ENCODE measurements at regions of chr1 and their contacts with region 1.

Region 1: GRCh38 chr1:45303582-45304310 is 22.9 kb upstream of the HPDL start:
- DNase-seq: peak; percentile 99
- ATAC-seq: peak; percentile 93
- H3K4me3 ChIP-seq: peak overlapping the region; percentile 52
- H3K27ac ChIP-seq: peak overlapping the region; percentile 88
- H3K4me1 ChIP-seq: peaks cover 24% of the 10 kb centered on the region in 2 experiments
- H3K27me3 ChIP-seq: no peaks in the 10 kb centered on the region
- CTCF ChIP-seq: peak; percentile 95 to 99 (median 95)
- EP300 ChIP-seq: peak; percentile 31; the same call in 1 of the 2 replicates
- POLR2A ChIP-seq: peak; percentile 97
- RAD21 ChIP-seq: peak; percentile 93 to 94

Region 2: GRCh38 chr1:44730741-44731512 is 572.8 kb before region 1 on chr1 and contains the start of gene RNU5D-1:
- CTCF ChIA-PET with region 1: interaction called, 5 read pairs
- POLR2A ChIA-PET with region 1: interaction called, 3 read pairs
- in situ Hi-C with region 1: loop called (anchors 10 kb)
- intact Hi-C with region 1: loop called (anchors 5 kb)
- DNase-seq: peak; percentile 87 to 99 (median 90)
- ATAC-seq: peak; percentile 87
- H3K4me3 ChIP-seq: 0 out of 2 replicates have a peak within 1 kb of the TSS, but pooled peaks have one; percentile 3
- H3K27ac ChIP-seq: peak within 1 kb of the TSS; percentile 100
- H3K4me1 ChIP-seq: peaks cover 11 to 16% of the 10 kb centered on the region in 2 experiments
- H3K27me3 ChIP-seq: no peaks in the 10 kb centered on the region
- CTCF ChIP-seq: peak; percentile 79 to 97 (median 93)
- EP300 ChIP-seq: peak; percentile 80
- POLR2A ChIP-seq: peak; percentile 100
- RAD21 ChIP-seq: peak; percentile 4 to 54
- polyA plus RNA-seq, gene RNU5D-1: not detected

Region 3: GRCh38 chr1:44799770-44800584 is 503.8 kb before region 1 on chr1 and contains the start of gene PLK3:
- CTCF ChIA-PET with region 1: no interaction called
- POLR2A ChIA-PET with region 1: interaction called, 7 read pairs
- in situ Hi-C with region 1: loop called (anchors 10 kb)
- intact Hi-C with region 1: no loop called
- DNase-seq: peak; percentile 92 to 99 (median 96)
- ATAC-seq: peak; percentile 93
- H3K4me3 ChIP-seq: peak within 1 kb of the TSS; percentile 77
- H3K27ac ChIP-seq: peak within 1 kb of the TSS; percentile 69
- H3K4me1 ChIP-seq: peaks cover 23 to 53% of the 10 kb centered on the region in 2 experiments
- H3K27me3 ChIP-seq: no peaks in the 10 kb centered on the region; a peak in 1 of 5 replicates
- CTCF ChIP-seq: peak; percentile 94 to 96 (median 95)
- EP300 ChIP-seq: no peak; the same call in 1 of the 2 replicates
- POLR2A ChIP-seq: peak; percentile 91
- RAD21 ChIP-seq: peak; percentile 91 to 96
- polyA plus RNA-seq, gene PLK3: 0.52 to 1.9 TPM

Region 4: GRCh38 chr1:44842862-44843655 is 460.7 kb before region 1 on chr1 and contains the start of gene PTCH2:
- CTCF ChIA-PET with region 1: interaction called, 4 read pairs
- POLR2A ChIA-PET with region 1: interaction called, 4 read pairs
- in situ Hi-C with region 1: loop called (anchors 5 kb)
- intact Hi-C with region 1: no loop called
- DNase-seq: peak; percentile 83 to 95 (median 92)
- ATAC-seq: peak; percentile 93
- H3K4me3 ChIP-seq: peak within 1 kb of the TSS; percentile 56
- H3K27ac ChIP-seq: peak within 1 kb of the TSS; percentile 23; the same call in 1 of the 3 replicates
- H3K4me1 ChIP-seq: peaks cover 5 to 17% of the 10 kb centered on the region in 2 experiments; a peak in 3 of 5 replicates
- H3K27me3 ChIP-seq: no peaks in the 10 kb centered on the region
- CTCF ChIP-seq: no peak
- EP300 ChIP-seq: no peak
- POLR2A ChIP-seq: peak; percentile 58; the same call in 1 of the 2 replicates
- RAD21 ChIP-seq: no peak
- polyA plus RNA-seq, gene PTCH2: 0.15 to 0.25 TPM

Region 5: DNA sequence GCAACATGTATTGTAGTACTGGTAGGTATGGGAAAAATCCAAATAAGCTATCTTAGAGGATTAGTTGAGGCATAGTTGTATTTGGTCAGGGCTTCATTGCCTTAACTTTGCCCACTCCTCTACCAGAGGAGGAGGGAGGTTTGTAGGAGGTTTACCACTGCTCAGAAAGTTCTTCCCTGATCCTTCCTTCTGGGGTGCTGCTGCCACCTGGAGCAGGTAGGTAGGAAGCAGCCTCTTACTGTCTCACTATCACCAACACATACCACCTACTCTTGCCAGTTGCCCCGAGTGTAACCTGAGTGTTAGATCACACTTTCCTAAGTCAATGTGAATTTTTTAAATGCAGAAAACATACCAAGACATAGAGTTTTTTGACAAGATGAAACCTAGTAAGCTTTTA is 73.2 kb before region 1 on chr1:
- CTCF ChIA-PET with region 1: no interaction called
- POLR2A ChIA-PET with region 1: no interaction called
- in situ Hi-C with region 1: no loop called
- intact Hi-C with region 1: loop called (anchors 5 kb)
- DNase-seq: peak in 1 of 4 experiments; percentile 12
- ATAC-seq: peak; percentile 65
- H3K4me3 ChIP-seq: no peak overlapping the region
- H3K27ac ChIP-seq: no peak overlapping the region
- H3K4me1 ChIP-seq: no peaks in the 10 kb centered on the region
- H3K27me3 ChIP-seq: peaks cover 13 to 20% of the 10 kb centered on the region in 2 experiments; a peak in 4 of 5 replicates
- CTCF ChIP-seq: peak in 2 of 3 experiments; percentile 18 to 37; a peak in 1 of 6 replicates
- EP300 ChIP-seq: no peak
- POLR2A ChIP-seq: no peak
- RAD21 ChIP-seq: peak; percentile 28 to 60; a peak in 3 of 4 replicates

Region 6: GRCh38 chr1:45490626-45491486 is 187.1 kb after region 1 on chr1 and contains the start of gene TESK2:
- CTCF ChIA-PET with region 1: interaction called, 5 read pairs
- POLR2A ChIA-PET with region 1: interaction called, 3 read pairs
- in situ Hi-C with region 1: no loop called
- intact Hi-C with region 1: loop called (anchors 1 kb)
- DNase-seq: peak; percentile 89 to 95 (median 92)
- ATAC-seq: peak; percentile 93
- H3K4me3 ChIP-seq: peak within 1 kb of the TSS; percentile 57
- H3K27ac ChIP-seq: peak within 1 kb of the TSS; percentile 52
- H3K4me1 ChIP-seq: peaks cover 9 to 20% of the 10 kb centered on the region in 2 experiments; a peak in 4 of 5 replicates
- H3K27me3 ChIP-seq: no peaks in the 10 kb centered on the region
- CTCF ChIP-seq: 0 out of 6 replicates have a peak, but pooled peaks of 2 of the 3 experiments have one; percentile 5
- EP300 ChIP-seq: no peak
- POLR2A ChIP-seq: peak; percentile 72
- RAD21 ChIP-seq: 0 out of 4 replicates have a peak, but pooled peaks of 1 of the 2 experiments have one; percentile 7
- polyA plus RNA-seq, gene TESK2: 1.6 to 1.9 TPM

Measured in K562 (cell line).